ENCODE measurements at regions of chr12 and their contacts with region 1.

Region 1: GRCh38 chr12:63843721-63844390 is 644 bp upstream of the SRGAP1 start:
- DNase-seq: peak; percentile 90 to 92
- H3K4me3 ChIP-seq: peak overlapping the region; percentile 84
- H3K4me1 ChIP-seq: peaks cover 11% of the 10 kb centered on the region
- H3K27me3 ChIP-seq: no peaks in the 10 kb centered on the region

Region 2: GRCh38 chr12:62435303-62436163 is 1408.3 kb before region 1 on chr12:
- in situ Hi-C with region 1: loop called (anchors 25 kb)
- DNase-seq: peak; percentile 41 to 80
- H3K4me3 ChIP-seq: peak overlapping the region; percentile 22
- H3K4me1 ChIP-seq: 0 out of 2 replicates have a peak, but pooled peaks cover 3% of the 10 kb centered on the region
- H3K27me3 ChIP-seq: no peaks in the 10 kb centered on the region

Region 3: DNA sequence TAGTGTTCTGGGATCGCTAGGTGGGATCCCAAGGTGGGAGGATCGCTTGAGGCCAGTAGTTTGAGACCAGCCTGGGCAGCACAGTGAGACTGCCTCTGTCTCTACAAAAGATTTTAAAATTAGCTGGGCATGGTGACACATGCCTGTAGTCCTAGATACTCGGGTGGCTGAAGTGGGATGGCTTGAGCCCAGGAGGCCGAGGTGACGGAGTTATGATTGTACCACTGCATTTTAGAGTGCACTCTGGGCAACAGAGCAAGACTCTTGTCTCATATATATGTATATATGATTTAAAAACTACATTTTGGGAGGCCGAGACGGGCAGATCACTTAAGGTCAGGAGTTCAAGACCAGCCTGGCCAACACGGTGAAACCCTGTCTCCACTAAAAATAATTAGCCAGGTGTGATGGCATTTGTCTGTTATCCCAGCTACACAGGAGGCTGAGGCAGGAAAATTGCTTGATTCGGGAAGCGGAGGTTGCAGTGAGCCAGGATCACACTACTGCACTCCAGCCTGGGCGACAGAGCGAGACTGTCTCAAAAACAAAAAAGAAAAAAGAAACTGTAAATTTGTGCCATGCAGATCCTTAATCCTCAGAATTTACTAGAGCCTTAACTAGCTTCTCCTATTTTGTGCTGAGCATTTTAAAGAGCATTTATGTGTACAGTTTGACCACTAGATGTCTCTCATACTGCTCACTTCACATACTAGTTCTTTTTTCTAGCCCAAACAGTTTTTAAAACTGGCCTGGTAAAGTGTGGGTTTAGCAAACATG is 1262.4 kb before region 1 on chr12:
- in situ Hi-C with region 1: loop called (anchors 25 kb)
- DNase-seq: peak in 1 of 2 experiments; percentile 79
- H3K4me3 ChIP-seq: no peak overlapping the region
- H3K4me1 ChIP-seq: no peaks in the 10 kb centered on the region
- H3K27me3 ChIP-seq: no peaks in the 10 kb centered on the region

Region 4: DNA sequence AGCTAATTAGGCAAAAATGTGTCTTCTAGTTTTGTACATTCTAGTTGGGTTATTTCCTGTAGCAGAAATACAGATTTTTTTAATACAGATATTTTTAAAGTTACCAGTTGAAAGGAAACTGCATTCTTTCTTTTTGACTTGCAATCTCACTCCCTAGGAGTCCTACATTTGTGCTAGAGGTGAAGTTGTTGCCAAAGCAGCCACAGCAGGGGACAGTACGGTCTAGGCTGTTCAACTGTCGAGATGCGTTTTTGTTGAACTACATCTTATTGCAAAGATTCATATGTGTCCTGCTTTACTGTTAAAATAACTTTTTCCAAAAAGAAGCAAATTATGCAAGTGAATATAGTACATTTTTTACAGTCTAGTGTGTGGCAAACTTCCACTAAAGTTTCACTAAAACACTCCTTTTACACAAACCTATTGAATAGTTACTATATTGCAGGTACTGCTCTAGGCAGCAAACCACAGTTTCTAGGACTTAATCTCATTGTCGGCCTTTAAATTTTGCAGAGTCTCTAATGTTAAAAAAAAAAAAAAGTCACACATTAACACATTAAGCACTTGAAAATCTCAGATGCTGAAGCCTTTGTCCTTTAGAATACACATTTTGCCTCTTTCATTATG is 29.6 kb before region 1 on chr12:
- in situ Hi-C with region 1: no loop called
- DNase-seq: no peak
- H3K4me3 ChIP-seq: no peak overlapping the region
- H3K4me1 ChIP-seq: no peaks in the 10 kb centered on the region
- H3K27me3 ChIP-seq: no peaks in the 10 kb centered on the region

Measured in HAP-1 (cell line).